Caco-2 (cell line): ENCODE measurements at regions of chr2 and their contacts with region 1.

Region 1: GRCh38 chr2:230614913-230615332 is 97.7 kb upstream of the CAB39 start:
- DNase-seq: no peak
- H3K4me3 ChIP-seq: no peak overlapping the region
- H3K4me3 Mint-ChIP-seq: no peak overlapping the region
- H3K27ac Mint-ChIP-seq: no peak overlapping the region
- H3K4me1 ChIP-seq: no peaks in the 10 kb centered on the region
- H3K4me1 Mint-ChIP-seq: no peaks in the 10 kb centered on the region
- H3K27me3 ChIP-seq: no peaks in the 10 kb centered on the region
- H3K27me3 Mint-ChIP-seq: peaks cover 6% of the 10 kb centered on the region
- CTCF ChIP-seq: no peak

Region 2: GRCh38 chr2:230007931-230008707 is 606.8 kb before region 1 on chr2:
- CTCF ChIA-PET with region 1: no interaction called
- POLR2A ChIA-PET with region 1: no interaction called
- intact Hi-C with region 1: loop called (anchors 1 kb)
- DNase-seq: peak; percentile 60 to 66
- H3K4me3 ChIP-seq: no peak overlapping the region
- H3K4me3 Mint-ChIP-seq: no peak overlapping the region
- H3K27ac Mint-ChIP-seq: no peak overlapping the region
- H3K4me1 ChIP-seq: no peaks in the 10 kb centered on the region
- H3K4me1 Mint-ChIP-seq: no peaks in the 10 kb centered on the region
- H3K27me3 ChIP-seq: no peaks in the 10 kb centered on the region
- H3K27me3 Mint-ChIP-seq: no peaks in the 10 kb centered on the region
- CTCF ChIP-seq: peak; percentile 60 to 61

Region 3: GRCh38 chr2:230557065-230557464 is 57.9 kb before region 1 on chr2:
- CTCF ChIA-PET with region 1: no interaction called
- POLR2A ChIA-PET with region 1: no interaction called
- intact Hi-C with region 1: loop called (anchors 1 kb)
- DNase-seq: no peak
- H3K4me3 ChIP-seq: no peak overlapping the region
- H3K4me3 Mint-ChIP-seq: no peak overlapping the region
- H3K27ac Mint-ChIP-seq: no peak overlapping the region
- H3K4me1 ChIP-seq: no peaks in the 10 kb centered on the region
- H3K4me1 Mint-ChIP-seq: no peaks in the 10 kb centered on the region
- H3K27me3 ChIP-seq: no peaks in the 10 kb centered on the region
- H3K27me3 Mint-ChIP-seq: no peaks in the 10 kb centered on the region
- CTCF ChIP-seq: no peak